Right ventricle myocardium superior (tissue), 1 donor: ENCODE measurements at regions of chr9 and their contacts with region 1.

Region 1: DNA sequence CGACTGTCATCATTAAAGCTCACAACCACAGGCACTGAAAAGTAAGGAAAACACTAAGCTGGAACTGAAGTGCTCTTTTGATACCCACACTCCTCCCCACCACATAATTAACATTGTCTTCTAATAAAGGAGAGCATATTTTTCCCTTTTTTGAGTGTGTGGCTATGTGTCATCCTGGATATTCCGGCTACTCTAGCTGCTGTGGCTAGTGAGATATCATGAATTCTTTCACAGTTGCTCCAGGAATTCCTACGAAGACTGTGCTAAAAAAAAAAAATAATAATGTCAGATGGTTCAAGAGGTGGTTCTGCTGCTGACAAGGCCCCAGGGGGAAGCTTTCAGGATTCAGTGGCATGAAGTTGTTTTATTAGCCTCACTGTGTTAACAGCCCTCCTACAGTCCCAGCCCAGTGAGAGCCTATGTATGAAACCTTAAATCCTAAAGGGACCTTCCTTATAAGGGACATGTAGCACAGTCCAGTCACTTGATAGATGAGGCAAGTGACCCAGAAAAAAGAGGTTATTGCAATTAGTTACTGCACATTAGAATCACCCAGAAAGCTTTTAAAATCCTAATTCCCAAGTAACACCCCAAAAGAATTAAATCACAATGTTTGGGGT is 46.6 kb downstream of the TMEM252 start:
- DNase-seq: no peak
- ATAC-seq: peak; percentile 20

Region 2: GRCh38 chr9:68416936-68417564 is 77.0 kb before region 1 on chr9:
- intact Hi-C with region 1: loop called (anchors 10 kb)
- DNase-seq: no peak
- ATAC-seq: no peak

Region 3: GRCh38 chr9:68577774-68578591 is 83.9 kb after region 1 on chr9:
- intact Hi-C with region 1: no loop called
- DNase-seq: no peak
- ATAC-seq: no peak